ENCODE measurements at regions of chr12 and their contacts with region 1.

Region 1: DNA sequence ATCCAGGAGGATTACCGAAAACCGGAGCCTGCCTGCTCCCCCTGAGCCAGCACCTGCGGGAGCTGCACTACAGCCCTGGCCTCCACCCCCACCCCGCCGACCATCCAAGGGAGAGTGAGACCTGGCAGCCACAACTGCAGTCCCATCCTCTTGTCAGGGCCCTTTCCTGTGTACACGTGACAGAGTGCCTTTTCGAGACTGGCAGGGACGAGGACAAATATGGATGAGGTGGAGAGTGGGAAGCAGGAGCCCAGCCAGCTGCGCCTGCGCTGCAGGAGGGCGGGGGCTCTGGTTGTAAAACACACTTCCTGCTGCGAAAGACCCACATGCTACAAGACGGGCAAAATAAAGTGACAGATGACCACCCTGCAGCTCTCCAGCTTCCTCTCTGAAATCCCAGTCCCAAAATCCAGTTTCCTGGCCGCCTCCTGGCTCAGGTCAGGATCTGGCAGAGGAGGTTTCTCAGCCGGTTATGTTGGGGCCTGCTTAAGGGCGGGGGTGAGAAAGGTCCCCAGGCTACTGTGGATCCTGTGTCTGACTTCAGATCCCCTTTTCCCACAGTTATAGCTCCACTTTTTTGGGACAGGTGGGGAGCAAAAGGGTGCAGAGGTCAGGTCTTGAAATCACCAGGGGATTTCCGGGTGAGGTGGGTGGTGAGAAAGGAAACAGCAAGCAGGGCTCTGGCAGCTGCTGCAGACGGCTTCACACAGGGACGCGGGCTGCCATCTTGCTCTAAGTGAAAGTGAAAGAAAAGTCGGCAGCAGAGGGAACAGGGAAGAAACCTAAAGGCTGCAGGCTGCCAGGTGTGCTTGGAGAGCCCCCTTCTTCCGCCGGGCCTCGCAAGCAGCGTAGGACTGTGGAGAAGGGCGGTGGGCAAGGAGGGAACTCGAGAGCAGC is at the start of gene TAPBPL:
- DNase-seq: peak; percentile 54 to 91
- H3K4me3 ChIP-seq: peak within 1 kb of the TSS; percentile 69 to 74
- H3K27ac ChIP-seq: peak within 1 kb of the TSS; percentile 90 to 95
- H3K4me1 ChIP-seq: peaks cover 6 to 22% of the 10 kb centered on the region in 2 donors
- H3K27me3 ChIP-seq: no peaks in the 10 kb centered on the region
- CTCF ChIP-seq: no peak
- total RNA-seq, gene TAPBPL: 16.8 TPM

Region 2: DNA sequence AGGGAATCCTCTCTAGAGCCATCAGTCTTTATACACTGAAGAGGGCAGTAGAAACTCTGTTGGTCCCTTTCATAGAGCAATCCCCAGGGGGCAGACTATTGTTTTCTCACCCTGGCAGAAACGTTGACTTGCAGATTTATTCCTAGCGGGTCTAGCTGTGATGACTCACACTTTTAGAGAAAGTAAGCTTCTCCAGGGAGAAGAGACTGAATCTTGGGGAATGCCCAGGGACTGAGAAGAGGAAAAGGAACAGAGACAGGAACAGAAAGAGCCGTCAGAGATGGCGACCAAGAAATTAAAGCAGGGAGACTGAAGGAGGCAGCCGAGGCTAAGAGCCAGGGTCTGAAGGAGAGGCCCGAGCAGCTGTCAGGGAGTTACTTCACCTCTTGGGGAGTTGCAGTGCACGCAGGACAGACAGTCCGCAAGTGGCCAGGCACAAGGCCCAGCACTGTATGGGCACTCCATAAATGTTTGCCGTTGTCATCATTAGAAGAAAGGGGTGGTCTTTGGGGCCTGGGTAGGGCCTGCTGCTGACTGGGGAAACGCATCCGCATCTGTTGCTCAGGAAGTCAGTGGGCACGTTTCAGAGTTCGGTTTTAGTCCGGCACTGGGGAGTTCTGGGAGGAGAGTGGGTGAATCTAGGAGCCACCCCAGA is 128.1 kb before region 1 on chr12:
- intact Hi-C with region 1: loop called (anchors 5 kb)
- DNase-seq: peak in 1 of 2 donors; percentile 86
- H3K4me3 ChIP-seq: peak overlapping the region in 1 of 2 donors; percentile 44
- H3K27ac ChIP-seq: peak overlapping the region; percentile 75 to 81
- H3K4me1 ChIP-seq: peaks cover 5 to 30% of the 10 kb centered on the region in 2 donors
- H3K27me3 ChIP-seq: no peaks in the 10 kb centered on the region
- CTCF ChIP-seq: peak; percentile 40 to 56 (median 56)

Region 3: GRCh38 chr12:6430124-6430989 is 21.2 kb before region 1 on chr12:
- intact Hi-C with region 1: loop called (anchors 1 kb)
- DNase-seq: peak; percentile 46 to 97
- H3K4me3 ChIP-seq: peak overlapping the region; percentile 28 to 55
- H3K27ac ChIP-seq: peak overlapping the region; percentile 82 to 91
- H3K4me1 ChIP-seq: peaks cover 0 to 15% of the 10 kb centered on the region in 2 donors
- H3K27me3 ChIP-seq: no peaks in the 10 kb centered on the region
- CTCF ChIP-seq: no peak

Measured in ascending aorta (tissue), 2 donors.